Activated CD8-positive, alpha-beta T cell treated with anti-CD3 and anti-CD28 coated beads, Interleukin-2, amount 10 ng/mL, durations not matched to agents 7 days and 5 days (primary cell): ENCODE measurements at regions of chr9 and their contacts with region 1.

Region 1: DNA sequence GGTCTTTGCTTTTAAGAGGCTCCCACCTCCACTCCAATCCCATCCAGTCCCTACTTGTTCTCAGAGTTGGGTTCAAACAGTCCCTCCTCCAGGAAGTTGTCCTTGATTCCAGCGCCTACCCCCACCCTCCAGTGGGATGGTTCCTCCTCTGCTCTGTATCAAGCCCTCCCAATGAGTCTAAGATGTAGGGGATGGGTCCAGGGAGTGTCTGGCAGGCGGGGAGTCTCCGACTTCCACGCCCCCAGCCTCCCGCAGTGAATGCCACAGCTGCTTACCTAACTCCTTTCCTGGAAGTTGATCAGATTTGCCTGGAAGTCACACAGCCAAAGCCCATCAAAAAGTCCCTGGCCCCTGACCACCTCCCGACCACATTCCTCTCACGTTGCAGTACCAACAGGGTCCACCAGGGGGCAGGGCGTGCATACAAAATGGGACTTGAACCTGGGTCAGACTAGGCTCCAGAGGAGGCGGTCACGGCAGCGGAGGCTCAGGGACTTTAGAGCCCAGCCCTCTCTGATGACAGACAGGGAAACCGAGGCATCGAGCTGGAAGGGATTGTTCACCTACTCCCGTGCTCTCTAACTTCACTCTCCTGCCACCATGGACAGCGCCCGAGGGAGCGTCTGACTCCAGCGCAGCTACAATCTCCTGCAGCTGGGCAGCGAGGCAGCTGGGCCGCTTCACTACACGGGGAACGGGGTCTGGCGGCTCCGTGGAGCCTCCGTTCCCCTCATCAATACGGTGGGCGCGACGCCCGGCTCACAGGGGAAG is 25.0 kb upstream of the TDRD7 start:
- DNase-seq: peak; percentile 80
- ATAC-seq: peak; percentile 77
- H3K4me3 Mint-ChIP-seq: no peak overlapping the region
- H3K27ac Mint-ChIP-seq: peak overlapping the region; percentile 52
- H3K4me1 Mint-ChIP-seq: peaks cover 21% of the 10 kb centered on the region
- H3K27me3 Mint-ChIP-seq: peaks cover 23% of the 10 kb centered on the region

Region 2: DNA sequence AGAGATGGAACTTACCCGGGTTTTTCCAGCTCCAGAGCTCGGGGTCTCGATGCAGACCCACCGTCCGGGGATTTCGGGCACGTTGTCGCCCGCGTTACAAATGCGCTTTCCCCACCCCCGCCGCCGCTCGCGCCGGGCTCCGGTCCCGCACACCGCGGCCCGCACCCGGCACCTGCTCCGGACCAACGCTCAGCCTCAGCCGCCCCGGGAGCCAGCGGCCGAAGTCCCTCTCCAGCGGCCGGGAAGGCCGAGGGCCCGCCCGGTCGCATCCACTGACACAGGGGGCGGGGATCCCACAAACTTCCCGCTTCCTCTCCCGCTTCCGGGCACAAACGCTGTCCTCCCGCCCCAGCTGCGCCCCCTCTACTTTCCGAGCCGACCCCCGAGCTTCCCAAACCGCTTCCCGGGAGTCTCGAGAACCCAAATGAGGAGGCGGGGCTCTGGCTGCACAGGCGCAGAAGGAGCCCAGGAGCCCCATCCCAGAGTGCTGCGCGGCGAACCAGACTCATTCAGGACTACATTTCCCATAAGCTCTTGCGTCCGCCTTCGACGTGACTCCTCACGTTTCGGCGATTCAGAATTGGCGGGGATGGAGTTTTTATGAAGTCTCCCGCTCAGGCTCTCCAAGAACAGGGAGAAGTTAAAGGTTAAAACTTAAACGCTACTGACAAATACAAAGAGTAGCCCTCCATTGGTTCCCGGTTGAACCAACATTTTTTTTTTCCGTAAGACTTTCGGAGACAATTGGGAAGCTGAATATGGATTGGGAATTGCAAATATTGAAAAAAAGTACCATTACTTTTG is 532.6 kb before region 1 on chr9 and contains the start of gene ZNF782:
- CTCF ChIA-PET with region 1: interaction called, 11 read pairs
- POLR2A ChIA-PET with region 1: no interaction called
- DNase-seq: peak; percentile 90
- ATAC-seq: peak; percentile 95
- H3K4me3 Mint-ChIP-seq: peak within 1 kb of the TSS; percentile 100
- H3K27ac Mint-ChIP-seq: peak within 1 kb of the TSS; percentile 98
- H3K4me1 Mint-ChIP-seq: peaks cover 27% of the 10 kb centered on the region
- H3K27me3 Mint-ChIP-seq: peaks cover 16% of the 10 kb centered on the region
- total RNA-seq, gene ZNF782: 3.9 to 4.3 TPM

Region 3: GRCh38 chr9:97398999-97399758 is 12.3 kb after region 1 on chr9:
- CTCF ChIA-PET with region 1: interaction called, 41 read pairs
- POLR2A ChIA-PET with region 1: no interaction called
- DNase-seq: peak; percentile 65
- ATAC-seq: peak; percentile 45
- H3K4me3 Mint-ChIP-seq: no peak overlapping the region
- H3K27ac Mint-ChIP-seq: no peak overlapping the region
- H3K4me1 Mint-ChIP-seq: peaks cover 27% of the 10 kb centered on the region
- H3K27me3 Mint-ChIP-seq: peaks cover 41% of the 10 kb centered on the region

Region 4: GRCh38 chr9:97411789-97412625 is 25.1 kb after region 1 on chr9 and contains the start of gene TDRD7:
- CTCF ChIA-PET with region 1: interaction called, 15 read pairs
- POLR2A ChIA-PET with region 1: no interaction called
- DNase-seq: peak; percentile 88
- ATAC-seq: peak; percentile 87
- H3K4me3 Mint-ChIP-seq: peak within 1 kb of the TSS; percentile 82
- H3K27ac Mint-ChIP-seq: peak within 1 kb of the TSS; percentile 74
- H3K4me1 Mint-ChIP-seq: peaks cover 28% of the 10 kb centered on the region
- H3K27me3 Mint-ChIP-seq: peaks cover 25% of the 10 kb centered on the region
- total RNA-seq, gene TDRD7: 9.3 to 9.6 TPM

Region 5: GRCh38 chr9:97468658-97469448 is 81.9 kb after region 1 on chr9:
- CTCF ChIA-PET with region 1: interaction called, 13 read pairs
- POLR2A ChIA-PET with region 1: no interaction called
- DNase-seq: peak; percentile 43
- ATAC-seq: peak; percentile 64
- H3K4me3 Mint-ChIP-seq: no peak overlapping the region
- H3K27ac Mint-ChIP-seq: no peak overlapping the region
- H3K4me1 Mint-ChIP-seq: no peaks in the 10 kb centered on the region
- H3K27me3 Mint-ChIP-seq: no peaks in the 10 kb centered on the region